ENCODE measurements at regions of chr9 and their contacts with region 1.

Region 1: DNA sequence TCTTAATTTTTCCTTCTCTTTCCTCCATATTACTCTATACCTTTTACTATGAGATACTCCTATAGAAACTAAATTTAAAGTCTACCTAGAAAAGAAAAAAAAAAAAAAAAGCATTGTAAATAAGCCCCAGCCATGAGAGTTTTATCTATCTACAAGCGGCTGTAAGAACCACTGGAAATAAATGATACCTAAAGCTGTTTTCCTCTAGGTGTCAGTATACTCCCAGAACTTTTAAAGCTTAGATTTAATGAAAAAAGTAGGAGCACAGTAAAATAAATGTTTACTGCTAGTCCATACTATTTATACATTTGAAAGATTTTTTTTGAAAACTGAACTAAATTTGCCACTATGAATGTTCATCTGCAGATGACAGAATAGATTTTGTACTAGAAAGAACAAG is 26.2 kb downstream of the TYRP1 start:
- DNase-seq: no peak
- H3K4me3 Mint-ChIP-seq: no peak overlapping the region
- H3K27ac Mint-ChIP-seq: no peak overlapping the region
- H3K4me1 Mint-ChIP-seq: no peaks in the 10 kb centered on the region
- H3K27me3 Mint-ChIP-seq: no peaks in the 10 kb centered on the region

Region 2: DNA sequence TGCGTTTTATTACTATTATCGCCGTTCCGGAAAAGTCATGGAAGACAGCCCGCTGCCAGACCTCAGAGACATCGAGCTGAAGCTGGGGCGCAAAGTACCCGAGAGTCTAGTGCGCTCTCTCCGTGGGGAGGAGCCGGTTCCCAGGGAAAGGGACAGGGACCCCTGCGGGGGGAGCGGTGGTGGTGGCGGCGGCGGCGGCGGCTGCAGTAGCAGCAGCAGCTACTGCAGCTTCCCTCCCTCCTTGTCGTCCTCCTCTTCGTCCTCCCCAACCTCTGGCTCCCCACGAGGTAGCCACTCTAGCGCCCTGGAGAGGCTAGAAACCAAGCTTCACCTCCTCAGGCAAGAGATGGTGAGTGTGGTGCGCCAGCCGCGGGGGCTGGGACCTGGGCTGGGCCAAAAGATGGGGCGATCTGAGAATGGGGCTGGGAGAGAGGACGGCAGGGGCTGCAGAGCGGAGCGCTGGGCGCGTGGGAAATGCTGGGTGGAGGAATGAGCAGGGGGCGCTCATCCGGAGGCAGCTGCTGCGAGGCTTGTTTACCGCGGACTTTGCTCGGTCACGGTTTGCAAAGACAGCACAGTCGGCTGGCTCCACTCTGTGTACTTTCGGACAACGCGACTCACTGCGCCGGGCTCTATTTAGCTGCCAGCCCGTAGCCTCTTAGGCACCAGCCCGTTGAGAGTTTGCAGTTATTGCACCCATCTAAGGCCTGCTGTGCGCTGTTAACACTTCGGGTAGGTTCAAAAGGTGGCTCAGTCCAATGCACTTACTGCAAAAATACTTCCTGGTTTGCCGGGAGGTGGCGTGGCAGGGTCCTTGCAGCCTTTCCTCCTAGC is 56.5 kb after region 1 on chr9:
- CTCF ChIA-PET with region 1: no interaction called
- POLR2A ChIA-PET with region 1: no interaction called
- intact Hi-C with region 1: no loop called
- DNase-seq: no peak
- H3K4me3 Mint-ChIP-seq: peak overlapping the region; percentile 12
- H3K27ac Mint-ChIP-seq: no peak overlapping the region
- H3K4me1 Mint-ChIP-seq: peaks cover 3% of the 10 kb centered on the region
- H3K27me3 Mint-ChIP-seq: peaks cover 17% of the 10 kb centered on the region

Region 3: DNA sequence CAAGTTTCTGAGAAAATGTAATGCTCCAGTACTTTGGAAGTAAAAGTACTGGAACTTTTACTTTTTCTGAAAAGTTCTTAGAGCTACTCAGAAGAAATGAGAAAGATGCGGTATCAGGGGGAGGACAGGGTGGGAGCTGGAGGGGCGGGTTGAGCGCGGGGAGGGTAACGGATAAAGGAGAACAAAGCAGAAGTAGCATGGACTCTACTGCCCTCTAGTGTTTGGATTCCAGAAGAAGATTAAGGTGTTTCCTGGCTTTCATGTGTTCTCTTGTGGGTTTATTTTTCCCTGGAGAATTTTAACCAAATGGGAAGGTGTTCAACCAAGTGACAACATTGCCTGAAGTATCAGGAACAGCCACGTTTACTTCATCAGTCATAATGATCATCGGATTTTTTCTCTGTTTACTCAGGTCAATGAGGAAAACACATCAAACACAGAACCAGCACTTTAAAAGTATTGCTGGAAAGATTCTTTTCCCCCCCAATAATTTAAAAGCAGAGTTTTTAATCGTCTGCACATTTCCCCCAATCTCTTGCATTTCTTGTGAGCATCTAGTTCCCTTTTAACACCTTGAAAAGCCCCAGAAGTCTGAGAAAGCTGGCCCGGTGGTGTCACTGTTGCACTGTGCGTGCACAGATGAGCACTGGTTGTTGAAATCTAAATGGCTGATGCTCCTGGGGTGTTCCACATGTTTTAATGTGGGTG is 369.4 kb after region 1 on chr9:
- CTCF ChIA-PET with region 1: interaction called, 4 read pairs
- POLR2A ChIA-PET with region 1: no interaction called
- intact Hi-C with region 1: loop called (anchors 5 kb)
- DNase-seq: no peak
- H3K4me3 Mint-ChIP-seq: no peak overlapping the region
- H3K27ac Mint-ChIP-seq: no peak overlapping the region
- H3K4me1 Mint-ChIP-seq: no peaks in the 10 kb centered on the region
- H3K27me3 Mint-ChIP-seq: no peaks in the 10 kb centered on the region